Right cardiac atrium (tissue), 5 donors: ENCODE measurements at regions of chr17 and their contacts with region 1.

Region 1: DNA sequence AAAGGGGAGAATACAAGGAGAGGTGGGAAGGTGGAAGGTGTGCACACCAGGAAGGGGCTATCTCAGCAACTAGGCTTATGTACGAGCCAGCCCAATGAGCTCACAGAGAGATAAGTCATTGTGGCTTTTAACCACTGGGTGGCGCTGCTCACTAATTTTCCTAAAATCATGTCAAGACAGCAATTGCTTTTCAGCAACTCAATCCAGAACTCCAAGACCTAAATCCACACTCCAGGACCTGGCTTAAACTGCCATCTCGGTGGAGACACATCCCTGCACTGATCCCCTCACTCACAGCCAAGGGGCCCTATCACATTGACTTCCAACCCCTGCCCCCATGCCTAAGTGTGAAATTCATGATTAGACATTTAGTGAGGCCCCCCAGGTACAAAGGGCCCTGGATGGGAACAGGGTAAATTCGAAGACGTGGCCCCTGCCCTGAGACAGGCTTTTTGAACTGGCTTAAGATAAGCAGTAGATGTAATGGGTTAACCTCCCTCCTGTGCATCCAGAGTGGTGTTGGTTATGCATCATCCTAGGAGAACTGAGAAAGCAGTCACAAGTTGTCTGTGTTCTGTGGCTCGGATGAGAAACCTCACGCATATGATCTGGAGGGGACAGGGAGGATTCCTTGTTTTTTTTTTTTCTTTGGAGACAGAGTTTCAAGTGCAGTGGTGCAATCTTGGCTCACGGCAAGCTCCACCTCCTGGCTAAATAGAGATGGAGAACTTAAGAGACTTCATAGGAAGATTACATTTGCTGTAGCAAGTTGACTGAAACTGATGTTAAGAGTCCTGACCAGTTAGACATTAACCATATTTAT is 11.5 kb downstream of the CCL16 start:
- DNase-seq: peak; percentile 61 to 85 (median 68)
- ATAC-seq: peak; percentile 60 to 70
- H3K4me3 ChIP-seq: no peak overlapping the region
- H3K27ac ChIP-seq: no peak overlapping the region
- H3K4me1 ChIP-seq: no peaks in the 10 kb centered on the region
- H3K27me3 ChIP-seq: no peaks in the 10 kb centered on the region

Region 2: GRCh38 chr17:36148559-36149295 is 179.0 kb after region 1 on chr17:
- intact Hi-C with region 1: loop called in 3 of 4 experiments (anchors 5 to 10 kb)
- DNase-seq: peak; percentile 73 to 82 (median 81)
- ATAC-seq: peak; percentile 91
- H3K4me3 ChIP-seq: no peak overlapping the region
- H3K27ac ChIP-seq: no peak overlapping the region
- H3K4me1 ChIP-seq: no peaks in the 10 kb centered on the region
- H3K27me3 ChIP-seq: no peaks in the 10 kb centered on the region

Region 3: GRCh38 chr17:36475346-36475970 is 505.7 kb after region 1 on chr17:
- intact Hi-C with region 1: loop called (anchors 5 to 10 kb)
- DNase-seq: no peak
- ATAC-seq: peak in 1 of 2 donors; percentile 22
- H3K4me3 ChIP-seq: no peak overlapping the region
- H3K27ac ChIP-seq: no peak overlapping the region
- H3K4me1 ChIP-seq: no peaks in the 10 kb centered on the region
- H3K27me3 ChIP-seq: no peaks in the 10 kb centered on the region

Region 4: DNA sequence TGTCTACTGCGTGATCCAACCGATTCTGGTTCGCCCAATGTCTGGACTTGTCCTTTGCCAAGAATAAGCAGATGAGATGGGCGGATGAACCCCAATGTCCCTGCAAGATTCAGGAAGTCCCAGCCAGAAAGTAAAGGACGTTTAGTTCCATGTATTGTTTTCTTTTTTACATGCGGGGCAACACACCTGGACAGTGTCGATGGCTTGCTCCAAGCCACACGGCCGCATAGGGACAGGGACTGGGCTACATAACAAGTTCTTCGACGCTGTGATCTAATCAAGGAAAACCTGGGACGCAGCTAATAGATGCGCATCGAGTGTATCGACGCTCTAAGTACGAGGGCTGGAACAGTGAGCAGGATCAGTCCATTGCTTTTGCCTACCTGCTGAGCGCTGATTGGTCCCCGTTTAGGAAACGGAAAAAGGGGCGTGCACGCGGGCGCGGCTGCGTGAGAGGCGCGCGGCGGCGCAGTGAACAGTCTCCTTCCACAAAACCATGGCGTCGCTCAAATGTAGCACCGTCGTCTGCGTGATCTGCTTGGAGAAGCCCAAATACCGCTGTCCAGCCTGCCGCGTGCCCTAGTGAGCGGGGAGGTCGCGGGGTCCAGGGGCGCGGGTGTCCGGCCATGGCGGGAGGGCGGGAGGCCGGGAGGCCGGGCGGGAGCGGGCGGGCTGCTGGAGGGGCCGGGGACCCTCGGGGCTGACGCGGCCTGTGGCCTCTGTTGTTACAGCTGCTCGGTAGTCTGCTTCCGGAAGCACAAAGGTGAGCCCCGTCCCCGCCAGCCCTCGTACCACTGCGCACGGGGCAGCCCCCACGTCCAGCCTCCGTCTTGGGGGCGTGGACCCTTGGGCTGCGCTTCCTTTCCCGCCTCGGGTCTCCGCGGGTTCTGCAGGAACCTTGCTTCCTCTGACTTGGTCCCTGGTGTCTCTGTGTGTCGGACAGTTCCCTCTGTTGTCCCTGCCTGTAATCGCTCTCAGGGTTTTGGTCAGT is 516.7 kb after region 1 on chr17 and contains the start of gene ZNHIT3:
- intact Hi-C with region 1: loop called in 3 of 4 experiments (anchors 5 to 10 kb)
- DNase-seq: peak; percentile 91 to 97 (median 95)
- ATAC-seq: peak; percentile 94 to 95
- H3K4me3 ChIP-seq: peak within 1 kb of the TSS; percentile 88
- H3K27ac ChIP-seq: peak within 1 kb of the TSS; percentile 44
- H3K4me1 ChIP-seq: peaks cover 3% of the 10 kb centered on the region
- H3K27me3 ChIP-seq: no peaks in the 10 kb centered on the region
- total RNA-seq, gene ZNHIT3: 17.7 to 24.0 (median 23.6) TPM